ENCODE measurements at regions of chr17 and their contacts with region 1.

Region 1: DNA sequence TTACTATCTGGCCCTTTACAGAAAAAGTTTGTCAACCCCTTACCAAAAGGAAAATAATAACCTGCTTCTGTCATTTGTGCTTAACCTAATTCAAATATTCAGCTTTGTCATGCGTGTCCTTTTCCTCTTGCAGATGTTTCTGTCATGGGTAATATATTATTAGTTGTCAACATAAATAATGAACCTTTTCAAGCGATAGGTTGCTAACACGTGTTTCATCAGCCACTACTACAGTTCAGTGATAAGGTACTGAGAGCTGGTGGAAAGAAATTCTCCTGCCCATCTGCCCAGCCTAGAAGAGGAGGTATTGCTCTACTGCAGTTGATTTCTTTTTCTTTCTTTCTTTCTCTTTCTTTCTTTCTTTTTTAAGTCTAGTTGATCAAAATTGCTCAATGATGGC is 12.0 kb upstream of the SRSF1 start:
- DNase-seq: no peak
- H3K4me3 ChIP-seq: no peak overlapping the region
- H3K27ac ChIP-seq: no peak overlapping the region
- H3K4me1 ChIP-seq: no peaks in the 10 kb centered on the region
- H3K27me3 ChIP-seq: no peaks in the 10 kb centered on the region

Region 2: DNA sequence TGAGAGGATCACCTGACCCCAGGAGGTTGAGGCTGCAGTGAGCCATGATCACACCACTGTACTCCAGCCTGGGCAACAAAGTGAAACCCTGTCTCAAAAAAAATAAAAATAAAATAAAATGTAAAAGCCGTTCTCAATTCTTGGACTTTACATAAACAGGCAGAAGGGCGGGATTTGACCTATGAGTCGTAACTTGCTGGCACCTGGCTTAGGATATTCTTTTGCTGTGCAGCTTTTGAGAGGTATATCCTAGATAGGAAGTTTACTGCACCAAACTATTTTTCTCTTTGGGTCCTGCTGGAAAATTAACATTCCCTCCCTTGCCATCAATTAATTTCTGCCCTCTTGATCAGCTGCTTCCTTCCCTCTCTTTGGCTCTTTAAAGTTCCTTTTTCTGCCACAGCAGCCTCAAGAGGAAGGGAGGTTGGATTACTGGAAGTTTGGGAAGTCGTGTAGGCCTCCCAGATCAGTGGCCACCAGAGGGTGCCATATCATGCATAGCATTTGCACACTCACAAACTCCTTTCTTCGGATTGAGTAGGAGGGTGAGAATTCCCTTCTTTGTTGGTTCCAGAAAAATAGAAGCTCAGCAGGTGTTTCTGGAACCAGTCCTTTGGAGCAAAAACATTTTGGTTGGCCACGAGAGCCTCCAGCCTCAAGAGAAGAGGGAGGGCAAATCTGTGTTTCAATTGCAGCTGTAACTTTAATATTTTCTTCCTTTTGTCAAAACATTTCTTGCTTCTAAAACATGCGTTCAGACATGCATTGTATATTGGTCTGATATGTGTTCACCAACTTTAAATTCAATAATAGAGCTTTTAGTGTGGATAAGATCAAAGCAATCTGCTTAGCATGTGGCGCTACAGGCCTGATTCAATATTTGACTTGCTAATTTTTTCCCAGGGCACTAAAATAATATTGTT is 421.2 kb before region 1 on chr17:
- in situ Hi-C with region 1: no loop called
- DNase-seq: peak; percentile 84
- H3K4me3 ChIP-seq: no peak overlapping the region
- H3K27ac ChIP-seq: no peak overlapping the region
- H3K4me1 ChIP-seq: peaks cover 5% of the 10 kb centered on the region; the same call in 1 of the 2 replicates
- H3K27me3 ChIP-seq: no peaks in the 10 kb centered on the region

Region 3: DNA sequence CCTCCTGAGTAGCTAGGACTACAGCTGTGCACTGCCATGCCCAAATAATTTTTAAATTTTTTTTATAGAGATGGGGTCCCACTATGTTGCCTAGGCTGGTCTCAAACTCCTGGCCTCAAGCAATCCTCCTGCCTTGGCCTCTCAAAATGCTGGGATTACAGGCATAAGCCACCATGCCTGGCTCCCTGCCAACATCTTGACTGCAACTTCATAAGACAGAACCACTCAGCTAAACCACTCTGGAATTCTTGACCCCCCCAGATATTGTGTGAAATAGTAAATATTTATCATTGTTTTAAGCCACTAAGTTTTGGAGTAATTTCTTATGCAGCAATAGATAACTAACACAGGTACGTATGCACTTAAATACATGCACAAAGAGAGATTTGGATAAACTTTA is 90.2 kb after region 1 on chr17:
- in situ Hi-C with region 1: loop called (anchors 10 kb)
- DNase-seq: no peak
- H3K4me3 ChIP-seq: no peak overlapping the region
- H3K27ac ChIP-seq: no peak overlapping the region
- H3K4me1 ChIP-seq: no peaks in the 10 kb centered on the region
- H3K27me3 ChIP-seq: no peaks in the 10 kb centered on the region

Region 4: DNA sequence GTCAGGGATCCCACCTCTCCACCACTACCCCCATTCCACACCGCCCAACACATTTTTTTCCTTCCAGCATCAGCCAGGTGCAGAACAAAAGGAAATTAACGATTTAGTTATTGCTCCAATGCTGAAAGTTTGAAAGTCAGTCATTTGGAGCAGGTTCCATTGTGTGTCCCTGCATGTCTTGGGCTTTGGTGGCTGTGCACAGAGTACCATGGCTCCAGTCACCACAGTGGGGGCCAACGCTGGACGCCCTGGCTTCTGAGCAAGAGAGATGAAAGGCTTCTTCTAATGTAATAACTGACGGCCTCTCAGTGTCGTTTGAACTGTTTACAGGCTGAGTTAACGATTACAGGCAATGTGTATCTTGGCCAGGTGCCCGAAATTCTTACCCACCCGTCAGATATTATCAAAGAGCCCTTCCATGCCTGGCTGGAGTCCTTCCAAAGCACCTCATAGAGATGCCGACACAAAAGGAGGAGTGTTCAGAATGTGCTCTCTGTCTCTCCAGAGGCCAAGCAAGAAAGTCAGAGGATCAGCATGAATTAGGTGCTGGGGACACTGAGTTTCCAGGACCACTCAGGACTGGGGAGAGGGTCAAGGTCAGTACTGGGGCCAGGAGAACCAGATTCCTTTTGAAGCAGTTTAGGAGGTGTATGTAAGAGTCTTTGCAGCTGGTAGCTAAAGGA is 372.4 kb after region 1 on chr17:
- in situ Hi-C with region 1: no loop called
- DNase-seq: no peak
- H3K4me3 ChIP-seq: no peak overlapping the region
- H3K27ac ChIP-seq: no peak overlapping the region
- H3K4me1 ChIP-seq: no peaks in the 10 kb centered on the region
- H3K27me3 ChIP-seq: peaks cover 71% of the 10 kb centered on the region

Measured in GM23248 (cell line).